ENCODE measurements at regions of chr6 and their contacts with region 1.

Region 1: DNA sequence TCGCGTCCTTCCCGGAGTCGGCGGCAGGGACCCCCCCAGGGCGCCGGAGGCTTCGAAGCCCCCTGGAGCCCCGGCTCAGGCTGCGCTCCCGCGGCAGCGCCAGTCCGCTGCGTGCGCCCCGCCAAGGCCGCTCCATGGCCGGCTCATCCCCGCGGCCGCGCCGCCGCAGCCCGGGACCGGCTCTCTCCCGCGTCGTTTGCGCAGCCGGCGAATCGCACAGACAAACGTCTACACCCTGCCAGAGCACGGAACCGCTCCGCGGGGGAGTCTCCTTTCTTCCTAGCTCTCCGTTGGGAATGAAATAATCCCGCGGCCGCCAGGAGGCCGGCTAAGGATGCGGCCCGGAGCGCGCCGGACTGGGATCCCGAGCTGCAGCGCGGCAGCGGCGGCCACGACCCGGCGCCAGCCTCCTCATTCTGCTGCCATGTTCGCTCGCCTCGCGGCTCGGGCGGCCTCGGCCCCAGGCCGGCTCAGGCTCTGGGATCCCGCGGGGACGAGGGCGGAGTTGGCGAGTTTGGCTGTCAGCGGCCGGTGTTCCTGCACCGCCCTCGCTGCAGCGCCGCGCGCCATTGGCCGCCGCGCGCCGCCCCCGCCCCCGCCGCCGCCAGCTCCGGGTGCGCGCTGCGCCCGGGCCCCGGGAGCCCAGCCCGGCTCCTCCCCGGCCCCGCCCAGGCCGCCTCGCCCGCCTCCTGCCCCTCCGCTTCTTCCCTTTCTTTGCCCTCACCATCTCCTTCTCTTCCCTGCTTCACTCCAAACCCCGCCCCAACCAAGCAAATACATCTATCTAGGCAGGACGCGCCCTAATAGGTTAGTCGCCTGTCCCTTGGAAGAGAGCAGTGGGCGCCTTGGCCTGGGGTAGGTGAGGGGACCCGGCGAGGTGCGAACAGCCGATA is at the start of gene GFOD1:
- DNase-seq: peak; percentile 78
- H3K4me3 Mint-ChIP-seq: peak within 1 kb of the TSS; percentile 85
- H3K27ac Mint-ChIP-seq: peak within 1 kb of the TSS; percentile 70
- H3K4me1 Mint-ChIP-seq: peaks cover 42% of the 10 kb centered on the region
- H3K27me3 Mint-ChIP-seq: peaks cover 12% of the 10 kb centered on the region
- total RNA-seq, gene GFOD1: 4.6 and 4.8 TPM in 2 replicates

Region 2: GRCh38 chr6:13336553-13336952 is 150.8 kb before region 1 on chr6:
- intact Hi-C with region 1: loop called (anchors 2 kb)
- DNase-seq: peak; percentile 63
- H3K4me3 Mint-ChIP-seq: no peak overlapping the region
- H3K27ac Mint-ChIP-seq: no peak overlapping the region
- H3K4me1 Mint-ChIP-seq: peaks cover 31% of the 10 kb centered on the region
- H3K27me3 Mint-ChIP-seq: peaks cover 1% of the 10 kb centered on the region

Region 3: GRCh38 chr6:13395272-13396237 is 91.8 kb before region 1 on chr6:
- intact Hi-C with region 1: no loop called
- DNase-seq: no peak
- H3K4me3 Mint-ChIP-seq: no peak overlapping the region
- H3K27ac Mint-ChIP-seq: no peak overlapping the region
- H3K4me1 Mint-ChIP-seq: peaks cover 8% of the 10 kb centered on the region
- H3K27me3 Mint-ChIP-seq: no peaks in the 10 kb centered on the region

Region 4: DNA sequence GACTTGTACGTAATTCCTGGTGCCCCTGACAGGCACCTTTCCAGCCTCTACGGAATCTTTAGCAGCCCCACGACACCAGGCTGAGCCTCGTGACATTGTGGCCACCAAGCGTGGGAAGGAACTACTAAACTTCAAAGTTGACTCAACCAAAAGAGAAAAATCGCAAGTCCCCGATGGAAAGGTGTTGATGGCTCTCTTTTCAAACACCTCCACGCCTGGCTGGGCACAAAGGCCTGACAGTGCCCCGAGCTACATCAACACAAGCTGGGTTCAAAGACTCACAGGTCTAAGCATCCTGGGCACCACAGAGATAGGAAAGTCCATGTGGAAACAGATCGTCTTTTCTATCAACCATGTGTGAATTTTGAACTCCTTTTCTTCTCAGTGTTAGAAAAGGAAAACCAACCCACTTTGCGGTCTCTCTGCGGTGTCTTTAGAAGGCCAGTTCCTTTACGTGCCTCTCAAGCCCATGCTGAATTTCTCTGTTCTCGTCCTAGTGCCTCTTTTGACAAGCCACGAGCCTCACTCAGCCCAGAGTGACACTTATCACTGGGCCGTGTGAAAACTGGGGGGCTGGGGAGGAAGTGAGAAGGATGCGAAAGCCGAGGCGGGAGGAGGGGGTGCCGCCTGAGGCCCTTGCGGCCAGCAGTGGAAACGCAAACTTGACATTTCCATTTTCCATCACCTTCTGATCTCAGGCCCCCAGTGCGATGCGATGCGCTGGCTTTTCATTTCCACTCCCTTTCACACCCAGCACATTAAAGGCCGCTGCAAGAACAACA is 59.4 kb before region 1 on chr6:
- intact Hi-C with region 1: loop called (anchors 1 kb)
- DNase-seq: peak; percentile 64
- H3K4me3 Mint-ChIP-seq: peak overlapping the region; percentile 27
- H3K27ac Mint-ChIP-seq: peak overlapping the region; percentile 84
- H3K4me1 Mint-ChIP-seq: peaks cover 71% of the 10 kb centered on the region
- H3K27me3 Mint-ChIP-seq: no peaks in the 10 kb centered on the region

Region 5: DNA sequence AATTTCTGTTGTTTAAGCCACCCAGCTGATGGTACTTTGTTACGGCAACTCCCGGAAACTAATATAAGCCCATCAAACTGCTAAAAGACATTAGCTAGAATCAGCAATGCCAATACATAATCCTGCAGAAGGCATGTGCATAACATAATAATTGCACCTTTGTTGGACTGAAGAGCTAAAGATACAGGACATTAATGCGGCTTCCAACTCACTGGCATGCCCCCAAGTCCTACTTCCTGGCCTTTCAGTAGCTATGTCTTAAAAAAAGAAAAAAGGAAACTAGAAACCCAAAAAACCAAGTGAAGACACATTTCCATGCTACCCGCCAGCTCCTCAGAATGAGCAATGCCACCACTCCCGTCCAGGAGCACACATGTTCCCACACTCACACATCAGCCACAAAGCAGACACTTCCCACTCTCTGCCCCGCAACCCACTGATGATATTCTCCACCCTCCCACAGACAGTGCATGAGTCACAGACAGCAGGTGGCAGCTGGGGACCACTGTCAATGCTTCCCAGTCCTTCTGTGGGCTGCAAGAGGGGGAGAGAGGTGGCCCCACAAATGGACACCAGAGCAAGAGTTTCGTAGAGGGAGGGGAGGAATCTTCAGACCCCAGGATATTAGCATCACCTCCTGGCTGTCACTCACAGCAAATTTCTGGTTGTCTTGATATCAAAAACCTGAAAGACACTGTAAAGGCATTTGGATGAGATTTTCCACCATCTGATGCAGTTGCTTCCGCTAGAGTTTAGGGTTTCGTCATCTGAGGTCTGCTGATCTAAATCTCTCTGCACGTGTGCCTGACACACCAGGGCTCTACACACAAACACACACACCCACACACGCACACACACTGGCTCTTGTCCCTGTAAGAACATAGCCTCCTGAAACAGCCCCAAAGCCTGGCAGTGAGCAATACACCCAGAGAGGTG is 32.8 kb before region 1 on chr6:
- intact Hi-C with region 1: loop called (anchors 1 kb)
- DNase-seq: peak; percentile 52
- H3K4me3 Mint-ChIP-seq: peak overlapping the region; percentile 30
- H3K27ac Mint-ChIP-seq: peak overlapping the region; percentile 71
- H3K4me1 Mint-ChIP-seq: peaks cover 47% of the 10 kb centered on the region
- H3K27me3 Mint-ChIP-seq: no peaks in the 10 kb centered on the region

Region 6: GRCh38 chr6:13466304-13467215 is 20.8 kb before region 1 on chr6:
- intact Hi-C with region 1: loop called (anchors 1 kb)
- DNase-seq: no peak
- H3K4me3 Mint-ChIP-seq: peak overlapping the region; percentile 11
- H3K27ac Mint-ChIP-seq: peak overlapping the region; percentile 85
- H3K4me1 Mint-ChIP-seq: peaks cover 62% of the 10 kb centered on the region
- H3K27me3 Mint-ChIP-seq: no peaks in the 10 kb centered on the region